GM12878 (cell line): ENCODE measurements at regions of chr5 and their contacts with region 1.

Region 1: GRCh38 chr5:317086-317811 is 4.3 kb upstream of the AHRR start:
- DNase-seq: no peak
- ATAC-seq: peak; percentile 89
- H3K4me3 ChIP-seq: no peak overlapping the region
- H3K27ac ChIP-seq: no peak overlapping the region; the same call in 1 of the 2 replicates
- H3K4me1 ChIP-seq: peaks cover 23% of the 10 kb centered on the region
- H3K27me3 ChIP-seq: no peaks in the 10 kb centered on the region
- CTCF ChIP-seq: peak; percentile 95 to 99 (median 98); a peak in 5 of 6 replicates
- EP300 ChIP-seq: peak in 1 of 2 experiments; percentile 36; a peak in 1 of 4 replicates
- POLR2A ChIP-seq: no peak; the same call in 1 of the 2 replicates
- RAD21 ChIP-seq: peak; percentile 94

Region 2: DNA sequence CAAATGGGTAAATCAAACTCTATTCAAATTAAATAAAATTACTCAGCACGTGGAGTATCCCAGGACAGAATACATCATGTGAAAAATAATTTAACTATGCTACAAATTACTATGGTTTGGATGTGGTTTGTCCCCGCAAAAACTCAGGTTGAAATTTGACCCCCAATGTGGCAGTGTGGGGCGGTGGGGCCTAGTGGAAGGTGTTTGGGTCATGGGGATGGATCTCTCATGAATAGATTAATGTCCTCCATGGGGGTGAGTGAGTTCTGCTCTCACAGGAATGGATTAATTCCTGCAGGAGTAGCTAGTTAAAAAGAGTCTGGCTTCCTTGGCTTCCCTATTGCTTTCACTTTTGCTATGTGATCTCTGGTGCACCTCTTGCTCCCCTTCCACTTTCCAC is 301.3 kb before region 1 on chr5:
- CTCF ChIA-PET with region 1: no interaction called
- POLR2A ChIA-PET with region 1: no interaction called
- RAD21 ChIA-PET with region 1: no interaction called
- SMC1A ChIA-PET with region 1: no interaction called
- in situ Hi-C with region 1: no loop called
- intact Hi-C with region 1: no loop called
- DNase-seq: no peak
- ATAC-seq: no peak
- H3K4me3 ChIP-seq: no peak overlapping the region
- H3K27ac ChIP-seq: no peak overlapping the region
- H3K4me1 ChIP-seq: no peaks in the 10 kb centered on the region
- H3K27me3 ChIP-seq: no peaks in the 10 kb centered on the region
- CTCF ChIP-seq: no peak
- EP300 ChIP-seq: no peak
- POLR2A ChIP-seq: no peak
- RAD21 ChIP-seq: no peak

Region 3: DNA sequence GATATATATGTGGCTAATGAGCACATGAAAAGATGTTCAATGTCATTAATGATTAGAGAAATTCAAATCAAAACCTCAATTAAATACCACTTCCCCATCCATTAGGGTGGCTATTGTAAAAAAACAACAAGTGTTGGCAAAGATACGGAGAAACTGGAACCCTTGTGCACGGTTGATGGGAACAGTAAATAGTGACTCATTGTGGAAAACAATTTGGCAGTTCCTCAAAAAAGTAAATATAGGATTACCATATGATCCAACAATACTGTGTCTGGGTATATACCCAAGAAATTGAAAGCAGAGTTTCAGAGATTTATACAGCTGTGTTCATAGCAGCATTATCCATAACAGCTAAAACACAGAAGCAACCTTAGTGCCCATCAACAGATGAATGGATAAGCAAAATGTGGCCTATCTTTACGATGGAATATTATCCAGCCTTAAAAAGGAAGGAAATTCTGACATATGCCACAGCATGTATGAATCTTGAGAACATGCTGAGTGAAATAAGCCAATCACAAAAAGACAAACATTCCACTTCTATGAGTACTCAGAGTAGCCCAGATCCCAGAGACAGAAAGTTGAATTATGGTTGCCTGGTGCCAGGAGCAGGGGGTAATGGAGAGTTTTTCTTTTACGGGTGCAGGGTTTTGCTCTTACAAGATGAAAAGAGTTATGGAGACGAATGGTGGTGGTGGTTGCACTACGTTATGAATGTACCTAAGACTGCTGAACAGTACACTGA is 167.3 kb before region 1 on chr5:
- CTCF ChIA-PET with region 1: no interaction called
- POLR2A ChIA-PET with region 1: no interaction called
- RAD21 ChIA-PET with region 1: no interaction called
- SMC1A ChIA-PET with region 1: no interaction called
- in situ Hi-C with region 1: no loop called
- intact Hi-C with region 1: no loop called
- DNase-seq: no peak
- ATAC-seq: no peak
- H3K4me3 ChIP-seq: no peak overlapping the region
- H3K27ac ChIP-seq: no peak overlapping the region
- H3K4me1 ChIP-seq: no peaks in the 10 kb centered on the region
- H3K27me3 ChIP-seq: no peaks in the 10 kb centered on the region
- CTCF ChIP-seq: no peak
- EP300 ChIP-seq: no peak
- POLR2A ChIP-seq: no peak
- RAD21 ChIP-seq: no peak

Region 4: DNA sequence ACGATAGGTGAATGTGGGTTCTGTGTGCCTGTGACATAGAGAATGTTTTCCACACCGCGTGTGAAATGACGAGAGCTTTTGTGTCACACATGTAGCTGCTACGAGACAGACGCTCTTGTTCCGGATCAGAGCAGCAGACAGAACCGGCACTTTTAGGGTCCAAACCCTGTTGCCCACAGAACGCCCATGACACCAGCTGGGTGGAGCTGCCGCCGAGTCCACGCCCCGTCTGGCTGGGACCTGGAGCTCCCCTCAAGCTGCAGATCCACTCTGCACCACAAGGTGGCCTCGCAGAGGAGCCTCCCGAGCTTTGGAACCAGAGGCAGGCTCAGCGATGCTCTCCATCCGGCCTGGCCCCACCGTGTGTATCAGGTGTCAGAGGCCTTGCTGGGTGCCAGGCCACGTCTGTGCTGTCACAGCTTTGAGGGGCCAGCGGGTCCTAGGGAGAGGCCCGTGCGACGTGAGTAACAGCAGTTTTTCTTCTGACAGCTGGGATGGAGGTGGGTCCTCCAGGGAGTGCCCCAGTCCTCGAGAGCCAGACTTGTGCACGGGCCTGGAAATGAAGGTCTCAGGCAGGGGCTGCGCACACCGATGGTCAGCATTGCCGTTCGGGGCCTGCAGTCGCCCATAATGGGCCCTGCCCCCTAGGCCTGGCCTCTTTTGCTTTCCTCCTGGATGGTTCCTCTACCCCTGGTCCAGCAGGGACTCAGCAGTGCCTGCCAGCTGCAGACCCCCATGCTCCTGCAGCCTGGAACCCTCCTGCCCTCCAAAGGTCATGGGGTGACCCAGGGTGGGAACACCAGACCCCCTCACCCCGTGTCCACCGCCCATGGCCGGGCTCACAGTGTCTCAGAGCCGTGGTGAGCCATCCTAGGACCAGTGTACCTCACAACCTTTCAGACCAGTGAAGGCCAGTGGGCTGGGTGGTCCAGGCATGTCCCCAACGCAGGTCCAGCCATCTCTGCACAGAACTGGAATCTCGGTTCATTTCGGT is 128.5 kb before region 1 on chr5:
- CTCF ChIA-PET with region 1: interaction called, 8 read pairs
- POLR2A ChIA-PET with region 1: no interaction called
- RAD21 ChIA-PET with region 1: interaction called, 11 read pairs
- SMC1A ChIA-PET with region 1: no interaction called
- in situ Hi-C with region 1: no loop called
- intact Hi-C with region 1: no loop called
- DNase-seq: peak; percentile 28
- ATAC-seq: peak; percentile 95
- H3K4me3 ChIP-seq: no peak overlapping the region
- H3K27ac ChIP-seq: no peak overlapping the region
- H3K4me1 ChIP-seq: peaks cover 32% of the 10 kb centered on the region
- H3K27me3 ChIP-seq: no peaks in the 10 kb centered on the region; a peak in 2 of 4 replicates
- CTCF ChIP-seq: peak; percentile 85 to 97 (median 95)
- EP300 ChIP-seq: no peak
- POLR2A ChIP-seq: no peak
- RAD21 ChIP-seq: peak; percentile 70

Region 5: DNA sequence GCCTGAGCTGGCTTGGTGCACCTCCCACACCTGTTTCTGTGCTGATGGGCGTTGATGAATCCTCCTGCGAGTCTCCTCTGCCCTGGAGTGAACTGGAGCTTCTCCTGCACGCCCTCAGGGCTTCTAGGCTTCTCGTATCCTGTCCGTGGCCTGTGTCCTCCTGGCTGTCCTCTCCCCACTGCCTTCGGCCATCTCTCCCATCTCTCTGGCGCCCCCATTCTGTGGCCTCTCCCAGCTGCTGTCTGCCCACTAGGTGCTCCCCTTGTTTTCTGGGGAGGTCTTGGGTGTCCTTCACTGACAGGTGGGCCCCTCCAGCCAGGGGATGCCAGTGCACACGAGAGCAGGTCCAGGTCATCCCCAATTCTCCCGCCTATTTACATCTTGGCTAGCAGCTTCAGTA is 33.1 kb after region 1 on chr5:
- CTCF ChIA-PET with region 1: interaction called, 27 read pairs
- POLR2A ChIA-PET with region 1: interaction called, 5 read pairs
- RAD21 ChIA-PET with region 1: interaction called, 4 read pairs
- SMC1A ChIA-PET with region 1: interaction called, 3 read pairs
- in situ Hi-C with region 1: no loop called
- intact Hi-C with region 1: no loop called
- DNase-seq: no peak
- ATAC-seq: no peak; the same call in 2 of the 3 replicates
- H3K4me3 ChIP-seq: no peak overlapping the region
- H3K27ac ChIP-seq: no peak overlapping the region
- H3K4me1 ChIP-seq: peaks cover 17% of the 10 kb centered on the region
- H3K27me3 ChIP-seq: no peaks in the 10 kb centered on the region
- CTCF ChIP-seq: peak in 2 of 3 experiments; percentile 8 to 14; a peak in 1 of 6 replicates
- EP300 ChIP-seq: no peak
- POLR2A ChIP-seq: no peak
- RAD21 ChIP-seq: no peak

Region 6: GRCh38 chr5:424301-425110 is 107.3 kb after region 1 on chr5:
- CTCF ChIA-PET with region 1: interaction called, 126 read pairs
- POLR2A ChIA-PET with region 1: interaction called, 10 read pairs
- RAD21 ChIA-PET with region 1: interaction called, 82 read pairs
- SMC1A ChIA-PET with region 1: interaction called, 33 read pairs
- in situ Hi-C with region 1: no loop called
- intact Hi-C with region 1: no loop called
- DNase-seq: peak; percentile 82
- ATAC-seq: peak; percentile 93
- H3K4me3 ChIP-seq: no peak overlapping the region
- H3K27ac ChIP-seq: peak overlapping the region; percentile 99
- H3K4me1 ChIP-seq: peaks cover 22% of the 10 kb centered on the region
- H3K27me3 ChIP-seq: no peaks in the 10 kb centered on the region
- CTCF ChIP-seq: no peak
- EP300 ChIP-seq: peak; percentile 51 to 64; a peak in 2 of 4 replicates
- POLR2A ChIP-seq: peak; percentile 63; the same call in 1 of the 2 replicates
- RAD21 ChIP-seq: no peak

Region 7: GRCh38 chr5:472656-473553 is 155.7 kb after region 1 on chr5:
- CTCF ChIA-PET with region 1: interaction called, 12 read pairs
- POLR2A ChIA-PET with region 1: no interaction called
- RAD21 ChIA-PET with region 1: interaction called, 10 read pairs
- SMC1A ChIA-PET with region 1: interaction called, 5 read pairs
- in situ Hi-C with region 1: no loop called
- intact Hi-C with region 1: no loop called
- DNase-seq: no peak
- ATAC-seq: peak; percentile 80
- H3K4me3 ChIP-seq: peak overlapping the region; percentile 97
- H3K27ac ChIP-seq: peak overlapping the region; percentile 72
- H3K4me1 ChIP-seq: peaks cover 4% of the 10 kb centered on the region
- H3K27me3 ChIP-seq: no peaks in the 10 kb centered on the region
- CTCF ChIP-seq: no peak
- EP300 ChIP-seq: no peak
- POLR2A ChIP-seq: peak; percentile 93
- RAD21 ChIP-seq: no peak

Region 8: DNA sequence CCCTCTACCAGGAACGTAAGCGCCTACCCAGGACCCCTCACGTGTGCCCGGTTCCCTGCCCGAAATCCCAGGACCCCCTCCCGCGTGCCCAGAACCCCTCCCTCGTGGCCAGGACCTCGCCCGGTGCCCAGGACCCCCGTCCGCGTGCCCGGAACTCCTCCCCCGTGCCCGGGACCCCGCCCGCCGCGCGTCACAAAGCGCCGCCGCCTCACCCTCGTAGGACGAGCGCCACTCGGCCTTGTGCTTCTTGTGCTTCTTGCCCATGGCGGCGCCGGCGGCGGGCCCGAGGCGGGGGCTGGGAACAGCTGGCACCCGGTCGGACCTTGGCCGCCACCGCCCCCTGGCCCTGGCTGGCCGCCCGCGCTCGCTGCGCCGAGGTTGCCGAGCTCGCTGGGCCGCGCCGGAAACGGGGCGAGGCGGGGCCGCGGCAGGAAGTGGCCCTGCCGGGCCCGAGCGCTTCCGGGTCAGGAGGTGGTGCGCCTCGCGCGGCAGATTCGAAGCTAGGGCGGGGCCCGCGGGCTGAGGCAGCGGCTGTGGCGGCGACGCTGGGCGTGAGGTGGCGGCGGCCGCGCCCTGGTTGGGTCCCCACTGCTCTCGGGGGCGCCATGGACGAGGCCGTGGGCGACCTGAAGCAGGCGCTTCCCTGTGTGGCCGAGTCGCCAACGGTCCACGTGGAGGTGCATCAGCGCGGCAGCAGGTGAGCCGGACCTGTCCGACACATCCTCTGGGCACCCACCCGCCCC is 575.3 kb after region 1 on chr5 and contains the starts of genes BRD9 and TRIP13:
- CTCF ChIA-PET with region 1: no interaction called
- POLR2A ChIA-PET with region 1: no interaction called
- RAD21 ChIA-PET with region 1: no interaction called
- SMC1A ChIA-PET with region 1: no interaction called
- in situ Hi-C with region 1: loop called (anchors 5 kb)
- intact Hi-C with region 1: loop called (anchors 5 kb)
- DNase-seq: peak; percentile 4
- ATAC-seq: peak; percentile 97
- H3K4me3 ChIP-seq: peak within 1 kb of the TSS; percentile 97
- H3K27ac ChIP-seq: peak within 1 kb of the TSS; percentile 88
- H3K4me1 ChIP-seq: peaks cover 14% of the 10 kb centered on the region
- H3K27me3 ChIP-seq: no peaks in the 10 kb centered on the region
- CTCF ChIP-seq: 0 out of 6 replicates have a peak, but pooled peaks of 1 of the 3 experiments have one; percentile 1
- EP300 ChIP-seq: no peak
- POLR2A ChIP-seq: peak; percentile 93
- RAD21 ChIP-seq: no peak
- polyA plus RNA-seq, gene BRD9: 2.0 to 4.7 TPM
- polyA plus RNA-seq, gene TRIP13: 15.1 to 20.5 TPM